ENCODE measurements at regions of chr5 and their contacts with region 1.

Region 1: DNA sequence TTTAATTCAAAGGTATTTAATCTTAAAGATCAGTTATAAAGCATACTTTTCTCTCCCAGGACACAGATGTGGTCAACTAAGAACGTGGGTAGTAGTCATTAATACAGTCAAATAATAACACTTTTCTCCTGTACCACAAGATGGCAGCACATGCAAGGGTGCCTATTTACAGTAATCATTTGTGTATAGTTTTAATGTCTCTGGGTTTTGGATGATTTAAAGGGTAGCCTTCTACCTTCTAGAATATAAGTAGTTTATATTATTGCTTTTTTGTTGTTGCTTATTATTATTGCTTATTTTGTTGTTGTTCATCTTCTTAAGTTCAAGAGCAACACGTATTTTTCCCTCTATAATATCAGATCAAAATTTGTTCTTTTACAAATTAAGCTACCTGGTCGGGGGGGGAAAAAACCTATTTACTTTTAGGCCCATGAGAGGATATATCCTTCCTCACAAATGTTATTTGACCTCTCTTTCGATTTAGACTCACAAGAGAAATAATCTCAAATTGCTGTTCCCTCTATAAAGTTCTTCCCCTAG is 59.6 kb upstream of the SLC27A6 start:
- DNase-seq: peak in 1 of 2 donors; percentile 5
- ATAC-seq: no peak

Region 2: DNA sequence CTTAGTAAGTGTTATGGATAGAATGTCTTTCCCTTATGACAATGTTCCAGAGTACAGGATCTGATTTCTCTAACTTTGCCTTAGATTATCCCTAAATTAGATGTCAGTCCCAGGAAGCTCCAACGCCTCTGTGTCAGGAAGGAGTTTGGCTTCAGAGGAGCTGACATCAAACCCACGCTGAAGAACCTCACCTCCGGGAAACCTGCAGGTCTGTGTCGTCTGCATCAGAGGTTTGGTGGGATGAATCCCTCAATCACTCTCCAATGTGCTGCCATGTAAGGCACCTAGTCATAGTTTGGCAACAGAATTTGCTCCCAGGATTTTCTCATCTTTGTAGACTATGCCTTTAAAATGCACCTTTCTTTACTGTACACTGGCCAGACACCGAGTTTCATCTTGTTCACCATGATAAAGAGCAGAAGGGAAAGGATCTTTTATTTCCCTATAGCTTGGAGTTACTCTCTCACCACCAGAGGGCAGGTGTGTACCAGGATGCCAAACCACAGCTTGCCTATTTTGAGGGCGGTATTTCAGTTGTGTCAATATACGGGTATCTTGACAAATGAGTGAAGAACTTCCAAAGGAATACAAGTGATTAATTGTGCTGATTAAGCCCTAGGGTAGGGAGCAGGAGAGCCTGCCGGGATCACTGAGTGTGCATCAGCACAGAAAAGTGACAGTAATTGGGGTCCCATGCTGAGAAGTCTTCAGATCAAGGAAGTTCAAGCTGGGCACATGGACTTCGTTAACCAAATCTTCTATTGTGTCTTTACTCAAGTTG is 865.6 kb after region 1 on chr5:
- intact Hi-C with region 1: loop called in 1 of 2 experiments (anchors 5 kb)
- DNase-seq: peak in 1 of 2 donors; percentile 50
- ATAC-seq: peak; percentile 71